CD4-positive, alpha-beta memory T cell (primary cell): ENCODE measurements at regions of chr7 and their contacts with region 1.

Region 1: GRCh38 chr7:148884299-148885022 is 370 bp upstream of the EZH2 start:
- DNase-seq: peak; percentile 91 to 96 (median 94)
- H3K4me3 ChIP-seq: peak overlapping the region in 1 of 2 donors; percentile 84
- H3K4me3 Mint-ChIP-seq: peak overlapping the region; percentile 90 to 97 (median 94)
- H3K27ac ChIP-seq: peak overlapping the region; percentile 79
- H3K27ac Mint-ChIP-seq: peak overlapping the region; percentile 89 to 96 (median 92)
- H3K4me1 ChIP-seq: peaks cover 31% of the 10 kb centered on the region
- H3K4me1 Mint-ChIP-seq: peaks cover 12 to 38% (median 24%) of the 10 kb centered on the region in 4 donors
- H3K27me3 ChIP-seq: no peaks in the 10 kb centered on the region
- H3K27me3 Mint-ChIP-seq: no peaks in the 10 kb centered on the region

Region 2: GRCh38 chr7:148856891-148857290 is 27.6 kb before region 1 on chr7:
- CTCF ChIA-PET with region 1: interaction called, 8 read pairs
- POLR2A ChIA-PET with region 1: interaction called, 10 read pairs
- intact Hi-C with region 1: loop called (anchors 1 kb)
- DNase-seq: no peak
- H3K4me3 ChIP-seq: no peak overlapping the region
- H3K4me3 Mint-ChIP-seq: no peak overlapping the region
- H3K27ac ChIP-seq: no peak overlapping the region
- H3K27ac Mint-ChIP-seq: no peak overlapping the region
- H3K4me1 ChIP-seq: peaks cover 20% of the 10 kb centered on the region
- H3K4me1 Mint-ChIP-seq: peaks cover 11 to 21% (median 16%) of the 10 kb centered on the region in 4 donors
- H3K27me3 ChIP-seq: no peaks in the 10 kb centered on the region
- H3K27me3 Mint-ChIP-seq: no peaks in the 10 kb centered on the region

Region 3: DNA sequence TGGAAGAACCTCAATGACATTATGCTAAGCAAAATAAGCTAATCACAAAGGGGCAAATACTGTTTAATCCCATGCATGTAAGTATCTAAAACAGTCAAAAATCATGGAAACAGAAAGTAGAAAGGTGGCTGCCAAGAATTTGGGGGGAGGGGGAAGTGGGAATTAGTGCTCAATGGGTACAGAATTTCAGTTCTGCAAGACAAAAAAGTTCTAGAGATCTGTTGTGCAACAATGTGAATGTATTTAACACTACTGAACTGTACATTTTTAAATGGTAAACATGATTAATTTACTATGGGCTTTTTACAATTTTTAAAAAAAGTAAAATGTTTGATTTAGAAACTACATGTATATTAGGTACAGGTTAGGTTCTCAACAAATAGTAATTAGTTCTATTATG is 12.3 kb before region 1 on chr7:
- CTCF ChIA-PET with region 1: no interaction called
- POLR2A ChIA-PET with region 1: interaction called, 10 read pairs
- intact Hi-C with region 1: no loop called
- DNase-seq: no peak
- H3K4me3 ChIP-seq: no peak overlapping the region
- H3K4me3 Mint-ChIP-seq: peak overlapping the region in 1 of 8 donors; percentile 16
- H3K27ac ChIP-seq: no peak overlapping the region
- H3K27ac Mint-ChIP-seq: no peak overlapping the region
- H3K4me1 ChIP-seq: peaks cover 29% of the 10 kb centered on the region
- H3K4me1 Mint-ChIP-seq: peaks cover 11 to 31% (median 16%) of the 10 kb centered on the region in 4 donors
- H3K27me3 ChIP-seq: no peaks in the 10 kb centered on the region
- H3K27me3 Mint-ChIP-seq: no peaks in the 10 kb centered on the region

Region 4: DNA sequence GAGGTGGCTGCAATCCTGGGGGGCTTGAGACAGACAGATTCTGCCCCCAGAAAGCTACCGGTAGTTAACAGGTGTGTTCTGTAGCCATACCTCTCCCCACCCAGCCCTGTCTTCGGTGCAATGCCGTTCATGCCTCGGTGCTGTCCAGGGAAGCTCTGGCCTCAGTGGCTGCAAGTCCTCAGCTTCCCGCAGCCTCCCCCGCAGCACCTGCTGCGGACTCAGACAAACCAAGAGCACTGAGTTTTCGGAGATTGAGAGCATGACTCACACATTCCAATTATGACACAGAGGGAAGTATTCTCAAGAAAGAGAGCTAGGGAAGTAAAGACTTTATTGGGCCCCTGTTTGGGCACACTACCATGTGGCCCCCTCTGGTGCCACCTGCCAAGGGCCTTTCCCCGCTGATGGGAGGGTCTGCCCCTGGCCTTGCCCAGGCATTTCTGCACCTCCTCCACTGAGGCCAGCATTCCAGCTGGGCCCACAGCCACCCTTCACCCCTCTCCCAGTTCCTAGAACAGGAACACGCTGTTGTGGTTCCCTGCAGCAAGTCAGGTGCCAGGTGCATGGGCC is 29.8 kb after region 1 on chr7:
- CTCF ChIA-PET with region 1: interaction called, 5 read pairs
- POLR2A ChIA-PET with region 1: interaction called, 38 read pairs
- intact Hi-C with region 1: loop called (anchors 1 kb)
- DNase-seq: peak in 2 of 5 donors; percentile 12 to 58
- H3K4me3 ChIP-seq: peak overlapping the region; percentile 31 to 32
- H3K4me3 Mint-ChIP-seq: peak overlapping the region in 7 of 8 donors; percentile 37 to 85 (median 81)
- H3K27ac ChIP-seq: peak overlapping the region; percentile 56
- H3K27ac Mint-ChIP-seq: peak overlapping the region; percentile 63 to 96 (median 90)
- H3K4me1 ChIP-seq: peaks cover 52% of the 10 kb centered on the region
- H3K4me1 Mint-ChIP-seq: peaks cover 37 to 60% (median 48%) of the 10 kb centered on the region in 4 donors
- H3K27me3 ChIP-seq: no peaks in the 10 kb centered on the region
- H3K27me3 Mint-ChIP-seq: no peaks in the 10 kb centered on the region

Region 5: GRCh38 chr7:148940702-148941597 is 56.5 kb after region 1 on chr7:
- CTCF ChIA-PET with region 1: interaction called, 15 read pairs
- POLR2A ChIA-PET with region 1: interaction called, 34 read pairs
- intact Hi-C with region 1: loop called (anchors 1 kb)
- DNase-seq: peak; percentile 75 to 84 (median 80)
- H3K4me3 ChIP-seq: peak overlapping the region; percentile 54 to 75
- H3K4me3 Mint-ChIP-seq: peak overlapping the region; percentile 93 to 97 (median 96)
- H3K27ac ChIP-seq: peak overlapping the region; percentile 90
- H3K27ac Mint-ChIP-seq: peak overlapping the region; percentile 91 to 99 (median 98)
- H3K4me1 ChIP-seq: peaks cover 21% of the 10 kb centered on the region
- H3K4me1 Mint-ChIP-seq: peaks cover 6 to 25% (median 13%) of the 10 kb centered on the region in 4 donors
- H3K27me3 ChIP-seq: no peaks in the 10 kb centered on the region
- H3K27me3 Mint-ChIP-seq: no peaks in the 10 kb centered on the region

Region 6: DNA sequence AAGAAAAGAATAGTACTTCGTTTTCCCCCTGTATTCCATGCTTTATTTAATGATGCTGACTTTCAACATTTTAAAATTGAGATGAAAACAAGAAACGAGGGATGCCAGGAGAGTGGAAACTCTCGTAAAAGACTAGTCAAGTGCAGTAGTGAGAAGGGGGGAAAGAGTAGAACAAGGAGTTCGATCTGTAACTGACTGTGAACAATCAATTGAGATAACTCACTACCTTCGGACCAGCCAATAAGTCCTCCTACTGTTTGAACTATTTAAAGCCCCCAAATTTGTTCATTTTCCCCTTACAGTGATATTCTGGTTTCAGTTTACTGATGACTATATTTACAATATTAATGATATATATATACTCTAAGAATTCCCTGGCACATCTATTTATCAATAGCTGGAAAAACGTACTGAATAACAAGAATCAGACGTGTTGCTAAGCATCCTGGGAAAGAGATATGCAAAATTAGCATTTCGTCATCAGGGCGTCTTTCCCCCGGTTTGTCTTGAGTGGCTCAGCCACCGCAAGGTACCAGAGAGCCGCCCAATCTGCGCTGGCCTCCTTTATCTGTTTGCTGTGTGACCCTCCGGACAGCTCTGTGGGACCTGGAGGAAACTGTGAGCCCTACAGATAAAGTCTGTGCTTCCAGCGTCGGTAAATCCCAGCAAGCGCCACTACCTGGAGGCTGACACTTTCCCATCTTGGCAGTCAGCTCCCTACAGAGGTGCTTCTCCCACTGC is 102.7 kb after region 1 on chr7:
- CTCF ChIA-PET with region 1: no interaction called
- POLR2A ChIA-PET with region 1: interaction called, 7 read pairs
- intact Hi-C with region 1: loop called (anchors 1 kb)
- DNase-seq: peak; percentile 89 to 91 (median 90)
- H3K4me3 ChIP-seq: peak overlapping the region; percentile 95 to 98
- H3K4me3 Mint-ChIP-seq: peak overlapping the region; percentile 93 to 99 (median 98)
- H3K27ac ChIP-seq: peak overlapping the region; percentile 83
- H3K27ac Mint-ChIP-seq: peak overlapping the region; percentile 96 to 100 (median 98)
- H3K4me1 ChIP-seq: peaks cover 46% of the 10 kb centered on the region
- H3K4me1 Mint-ChIP-seq: peaks cover 27 to 59% (median 45%) of the 10 kb centered on the region in 4 donors
- H3K27me3 ChIP-seq: no peaks in the 10 kb centered on the region
- H3K27me3 Mint-ChIP-seq: peaks cover 2 to 5% of the 10 kb centered on the region in 2 donors